Activated naive CD4-positive, alpha-beta T cell treated with anti-CD3 and anti-CD28 coated beads for 36 hours (primary cell): ENCODE measurements at regions of chr3 and their contacts with region 1.

Region 1: DNA sequence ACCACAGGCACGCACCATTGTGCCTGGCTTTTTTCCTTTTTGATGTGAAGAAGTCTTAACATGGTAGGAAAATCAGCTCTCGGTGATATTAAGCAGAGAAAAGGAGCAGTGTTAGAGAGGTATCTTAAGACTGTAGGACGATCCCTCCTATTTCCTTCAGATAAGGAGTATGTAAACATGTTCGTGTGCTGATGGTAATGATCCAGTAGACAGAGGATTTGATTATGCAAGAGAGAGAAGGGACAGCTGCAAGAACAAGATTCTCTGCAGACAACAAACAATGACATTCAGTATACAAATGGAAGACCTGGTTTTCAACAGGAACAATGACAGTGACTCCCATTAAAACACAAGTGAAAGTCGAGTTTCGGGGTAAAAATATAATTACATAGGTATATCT is 95.1 kb upstream of the MELTF start:
- DNase-seq: no peak
- H3K4me3 Mint-ChIP-seq: no peak overlapping the region
- H3K27ac Mint-ChIP-seq: no peak overlapping the region
- H3K4me1 Mint-ChIP-seq: no peaks in the 10 kb centered on the region
- H3K27me3 Mint-ChIP-seq: no peaks in the 10 kb centered on the region

Region 2: GRCh38 chr3:197088370-197088769 is 36.3 kb before region 1 on chr3:
- CTCF ChIA-PET with region 1: no interaction called
- intact Hi-C with region 1: loop called (anchors 5 kb)
- DNase-seq: no peak
- H3K4me3 Mint-ChIP-seq: no peak overlapping the region
- H3K27ac Mint-ChIP-seq: no peak overlapping the region
- H3K4me1 Mint-ChIP-seq: peaks cover 16% of the 10 kb centered on the region
- H3K27me3 Mint-ChIP-seq: no peaks in the 10 kb centered on the region